ENCODE measurements at regions of chr10 and their contacts with region 1.

Region 1: GRCh38 chr10:58299580-58299979 is 30.6 kb downstream of the CISD1 start:
- DNase-seq: peak; percentile 60
- H3K4me3 ChIP-seq: no peak overlapping the region; a peak in 1 of 4 replicates
- H3K27ac ChIP-seq: no peak overlapping the region
- H3K4me1 ChIP-seq: no peaks in the 10 kb centered on the region
- H3K27me3 ChIP-seq: no peaks in the 10 kb centered on the region
- CTCF ChIP-seq: peak; percentile 86
- EP300 ChIP-seq: no peak
- RAD21 ChIP-seq: peak; percentile 84

Region 2: DNA sequence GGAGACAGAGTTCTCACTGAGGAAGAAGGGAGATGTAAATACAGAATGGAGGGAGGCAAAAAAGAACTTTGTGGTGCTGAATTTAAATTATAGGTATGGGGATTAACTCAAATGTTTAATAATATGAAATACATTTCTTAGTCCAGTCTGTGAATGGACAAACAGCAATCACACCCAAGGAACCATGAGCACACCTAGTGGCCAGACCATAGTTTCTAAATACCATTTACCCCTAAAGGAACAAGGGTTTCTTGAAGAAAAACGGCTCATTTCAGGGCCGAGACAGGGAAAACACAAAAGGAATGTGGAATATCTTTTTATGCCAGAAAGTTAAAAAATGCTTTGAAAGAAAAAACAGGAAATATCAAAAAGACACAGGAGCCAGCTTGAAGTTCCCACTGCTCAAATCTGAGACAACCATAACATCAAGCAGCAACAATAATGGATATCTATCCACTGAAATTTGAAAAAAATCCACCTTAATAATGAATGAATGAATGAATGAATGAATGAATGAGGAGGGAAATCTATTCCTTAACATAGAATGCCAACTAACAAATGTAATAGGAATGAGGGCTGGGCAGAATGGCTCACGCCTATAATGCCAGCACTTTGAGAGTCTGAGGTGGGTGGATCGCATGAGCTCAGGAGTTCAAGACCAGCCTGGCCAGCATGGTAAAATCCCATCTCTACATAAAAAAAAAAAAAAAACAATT is 40.4 kb before region 1 on chr10:
- CTCF ChIA-PET with region 1: no interaction called
- POLR2A ChIA-PET with region 1: no interaction called
- DNase-seq: no peak
- H3K4me3 ChIP-seq: no peak overlapping the region
- H3K27ac ChIP-seq: no peak overlapping the region
- H3K4me1 ChIP-seq: peaks cover 0 to 1% of the 10 kb centered on the region in 2 experiments; a peak in 2 of 4 replicates
- H3K27me3 ChIP-seq: no peaks in the 10 kb centered on the region
- CTCF ChIP-seq: 0 out of 2 replicates have a peak, but pooled peaks have one; percentile 27
- EP300 ChIP-seq: no peak
- RAD21 ChIP-seq: no peak

Region 3: DNA sequence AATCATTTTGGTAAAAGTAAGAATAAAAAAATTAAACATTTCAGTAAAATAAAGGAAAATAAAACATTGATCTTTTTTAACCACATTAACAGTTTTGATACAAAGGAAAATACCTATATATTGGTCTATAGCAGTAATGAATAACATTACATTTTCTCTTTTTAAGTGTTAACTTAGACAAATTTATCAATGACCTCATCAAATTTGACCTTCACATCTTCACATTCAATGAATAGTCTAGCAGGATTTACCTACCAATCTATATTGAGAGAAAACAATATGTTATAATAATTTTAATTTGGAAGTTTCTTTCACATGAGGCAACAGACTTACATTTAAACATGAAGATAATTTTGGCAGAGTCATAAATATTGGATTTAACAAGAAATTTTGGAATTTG is 17.3 kb after region 1 on chr10:
- CTCF ChIA-PET with region 1: interaction called, 16 read pairs
- POLR2A ChIA-PET with region 1: no interaction called
- DNase-seq: no peak
- H3K4me3 ChIP-seq: no peak overlapping the region
- H3K27ac ChIP-seq: no peak overlapping the region
- H3K4me1 ChIP-seq: no peaks in the 10 kb centered on the region
- H3K27me3 ChIP-seq: no peaks in the 10 kb centered on the region
- CTCF ChIP-seq: no peak
- EP300 ChIP-seq: no peak
- RAD21 ChIP-seq: no peak

Region 4: DNA sequence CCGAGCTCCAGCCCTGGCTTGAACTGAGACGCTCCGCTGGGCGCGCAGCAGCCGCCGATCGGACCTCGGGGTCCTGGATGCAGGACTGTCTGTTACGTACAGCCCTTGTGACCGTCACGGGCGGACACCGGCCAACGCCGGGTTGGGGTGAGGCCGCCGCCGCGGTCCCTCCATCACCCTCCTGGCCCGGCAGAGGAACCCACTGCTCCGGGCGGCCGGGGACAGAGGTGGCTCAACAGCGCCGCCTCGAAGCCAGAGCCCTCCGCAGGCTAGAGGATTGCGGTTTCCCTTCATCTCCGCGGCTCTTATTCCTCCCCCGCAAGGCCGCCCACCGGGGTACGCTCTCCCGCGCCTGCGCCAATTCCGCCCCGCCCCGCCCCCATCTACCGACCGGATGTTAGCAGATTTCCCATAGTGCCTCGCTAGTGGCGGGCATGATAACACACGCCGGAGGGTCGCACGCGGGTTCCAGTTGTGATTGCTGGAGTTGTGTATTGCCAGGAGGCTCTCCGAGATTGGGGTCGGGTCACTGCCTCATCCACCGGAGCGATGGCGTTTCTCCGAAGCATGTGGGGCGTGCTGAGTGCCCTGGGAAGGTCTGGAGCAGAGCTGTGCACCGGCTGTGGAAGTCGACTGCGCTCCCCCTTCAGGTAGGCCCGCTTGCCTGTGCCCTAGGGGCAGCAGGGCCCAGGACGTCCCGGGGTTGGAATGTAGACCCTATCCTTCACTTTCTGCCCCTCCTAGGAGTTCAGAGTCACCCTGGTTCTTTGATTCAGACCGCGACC is 85.6 kb after region 1 on chr10 and contains the start of gene TFAM:
- CTCF ChIA-PET with region 1: interaction called, 22 read pairs
- POLR2A ChIA-PET with region 1: no interaction called
- DNase-seq: peak; percentile 94
- H3K4me3 ChIP-seq: peak within 1 kb of the TSS; percentile 99 to 100
- H3K27ac ChIP-seq: peak within 1 kb of the TSS; percentile 90 to 96
- H3K4me1 ChIP-seq: peaks cover 11 to 18% of the 10 kb centered on the region in 2 experiments; a peak in 3 of 4 replicates
- H3K27me3 ChIP-seq: no peaks in the 10 kb centered on the region
- CTCF ChIP-seq: peak; percentile 49
- EP300 ChIP-seq: no peak
- RAD21 ChIP-seq: peak; percentile 53
- polyA plus RNA-seq, gene TFAM: 13.0 and 19.6 TPM in 2 replicates

Measured in SK-N-SH (cell line).